Activated CD4-positive, alpha-beta T cell treated with anti-CD3 and anti-CD28 coated beads, Interleukin-2, amount 10 ng/mL, durations not matched to agents 24 days and 14 days (primary cell): ENCODE measurements at regions of chr14 and their contacts with region 1.

Region 1: DNA sequence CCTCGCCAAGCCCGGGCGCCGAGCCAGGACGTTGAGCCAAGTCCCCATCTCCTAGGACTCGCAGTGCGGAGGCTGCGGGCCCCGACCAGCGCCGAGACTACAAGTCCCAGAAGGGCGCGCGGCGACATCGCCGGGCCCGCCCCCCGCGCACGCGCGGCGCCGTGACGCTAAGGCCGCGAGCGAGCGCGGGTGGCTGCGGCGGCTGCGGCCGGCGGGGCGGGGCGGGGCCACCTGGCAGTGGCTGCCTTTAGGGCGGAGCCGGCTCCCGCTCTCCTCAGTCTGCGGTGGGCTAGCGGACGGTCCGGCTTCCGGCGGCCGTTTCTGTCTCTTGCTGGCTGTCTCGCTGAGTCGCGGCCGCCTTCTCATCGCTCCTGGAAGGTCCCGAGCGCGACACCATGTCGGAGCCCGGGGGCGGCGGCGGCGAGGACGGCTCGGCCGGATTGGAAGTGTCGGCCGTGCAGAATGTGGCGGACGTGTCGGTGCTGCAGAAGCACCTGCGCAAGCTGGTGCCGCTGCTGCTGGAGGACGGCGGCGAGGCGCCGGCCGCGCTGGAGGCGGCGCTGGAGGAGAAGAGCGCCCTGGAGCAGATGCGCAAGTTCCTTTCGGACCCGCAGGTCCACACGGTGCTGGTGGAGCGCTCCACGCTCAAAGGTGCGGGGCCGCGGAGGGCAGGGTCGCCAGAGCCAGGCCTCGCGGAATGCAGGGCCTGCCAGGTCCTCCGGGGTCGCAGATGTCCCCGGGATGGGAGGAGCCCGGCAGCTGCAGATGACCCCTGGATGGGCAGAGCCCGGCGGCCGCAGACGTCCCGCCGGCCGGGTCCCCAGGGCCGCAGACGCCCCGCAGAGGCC is at the start of gene DYNC1H1:
- DNase-seq: peak; percentile 98
- H3K4me3 Mint-ChIP-seq: peak within 1 kb of the TSS; percentile 94
- H3K27ac Mint-ChIP-seq: peak within 1 kb of the TSS; percentile 94
- H3K4me1 Mint-ChIP-seq: peaks cover 35% of the 10 kb centered on the region
- H3K27me3 Mint-ChIP-seq: peaks cover 2% of the 10 kb centered on the region
- total RNA-seq, gene DYNC1H1: 265 and 272 TPM in 2 replicates

Region 2: DNA sequence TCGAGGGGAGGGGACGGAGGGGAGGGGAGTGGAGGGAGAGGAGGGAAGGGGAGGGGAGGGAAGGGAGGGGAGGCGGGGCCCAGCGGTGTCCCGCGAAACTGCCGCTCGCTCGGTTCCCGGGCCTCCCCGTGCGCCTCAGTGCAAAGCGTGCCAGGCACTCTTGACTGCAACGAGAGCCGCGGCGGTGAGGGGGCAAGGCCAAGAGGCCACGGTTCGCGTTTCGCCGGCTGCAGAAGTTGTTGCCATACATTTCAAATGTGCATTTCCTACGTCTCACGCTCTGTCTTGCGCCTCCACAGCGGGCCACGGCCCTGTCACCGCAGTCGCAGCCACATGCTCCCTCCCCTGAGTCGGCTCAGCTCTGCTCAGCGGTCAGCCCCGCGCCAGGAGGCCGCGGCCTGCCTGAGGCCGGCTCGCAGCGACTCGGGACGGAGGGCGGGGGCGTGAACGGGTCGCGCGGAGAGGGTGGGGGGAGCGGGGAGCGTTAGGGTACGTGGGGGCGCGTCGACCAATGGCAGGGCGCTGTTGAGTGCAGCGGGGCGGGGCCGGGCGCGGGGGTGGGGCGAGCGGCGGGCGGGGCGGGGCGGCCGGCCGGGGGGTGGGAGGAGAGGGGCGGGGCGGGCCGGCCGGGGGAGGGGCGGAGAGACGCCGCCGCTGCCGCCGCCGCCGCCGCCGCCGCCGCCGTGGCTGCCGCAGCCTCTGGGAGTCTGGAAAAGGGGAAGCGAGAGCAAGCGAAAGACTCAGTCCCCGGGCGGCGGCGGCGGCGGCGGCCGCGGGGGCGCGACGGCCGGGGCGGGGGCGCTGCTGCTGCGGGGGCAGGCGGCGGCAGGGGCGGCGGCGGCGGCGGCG is 203.3 kb before region 1 on chr14 and contains the start of gene PPP2R5C:
- intact Hi-C with region 1: loop called (anchors 2 kb)
- DNase-seq: peak; percentile 94
- H3K4me3 Mint-ChIP-seq: peak within 1 kb of the TSS; percentile 90
- H3K27ac Mint-ChIP-seq: peak within 1 kb of the TSS; percentile 86
- H3K4me1 Mint-ChIP-seq: peaks cover 39% of the 10 kb centered on the region
- H3K27me3 Mint-ChIP-seq: peaks cover 3% of the 10 kb centered on the region
- total RNA-seq, gene PPP2R5C: 160 and 181 TPM in 2 replicates

Region 3: GRCh38 chr14:101947906-101948665 is 16.4 kb before region 1 on chr14:
- intact Hi-C with region 1: loop called (anchors 1 kb)
- DNase-seq: peak; percentile 100
- H3K4me3 Mint-ChIP-seq: peak overlapping the region; percentile 95
- H3K27ac Mint-ChIP-seq: peak overlapping the region; percentile 97
- H3K4me1 Mint-ChIP-seq: peaks cover 17% of the 10 kb centered on the region
- H3K27me3 Mint-ChIP-seq: peaks cover 22% of the 10 kb centered on the region

Region 4: DNA sequence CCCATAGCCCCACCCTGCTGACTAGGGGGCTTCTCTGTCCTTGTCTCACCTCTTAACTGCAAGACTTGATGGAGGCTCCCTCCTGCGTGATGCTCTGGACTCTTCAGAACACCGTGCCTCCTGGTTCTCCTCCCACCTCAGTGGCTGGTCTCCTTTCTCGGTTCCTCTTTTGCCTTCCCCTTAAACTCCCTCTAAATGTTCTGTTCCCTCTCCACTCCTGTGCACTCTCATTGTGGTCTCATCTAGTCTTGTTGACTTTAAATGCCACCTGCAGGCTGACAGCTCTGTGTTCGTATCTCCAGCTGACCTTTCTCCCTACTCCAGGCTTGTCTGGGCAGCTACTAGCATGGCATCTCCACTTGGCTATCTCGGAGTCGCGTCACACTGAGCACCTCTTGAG is 28.2 kb after region 1 on chr14:
- intact Hi-C with region 1: no loop called
- DNase-seq: no peak
- H3K4me3 Mint-ChIP-seq: no peak overlapping the region
- H3K27ac Mint-ChIP-seq: peak overlapping the region; percentile 5
- H3K4me1 Mint-ChIP-seq: peaks cover 10% of the 10 kb centered on the region
- H3K27me3 Mint-ChIP-seq: no peaks in the 10 kb centered on the region

Region 5: DNA sequence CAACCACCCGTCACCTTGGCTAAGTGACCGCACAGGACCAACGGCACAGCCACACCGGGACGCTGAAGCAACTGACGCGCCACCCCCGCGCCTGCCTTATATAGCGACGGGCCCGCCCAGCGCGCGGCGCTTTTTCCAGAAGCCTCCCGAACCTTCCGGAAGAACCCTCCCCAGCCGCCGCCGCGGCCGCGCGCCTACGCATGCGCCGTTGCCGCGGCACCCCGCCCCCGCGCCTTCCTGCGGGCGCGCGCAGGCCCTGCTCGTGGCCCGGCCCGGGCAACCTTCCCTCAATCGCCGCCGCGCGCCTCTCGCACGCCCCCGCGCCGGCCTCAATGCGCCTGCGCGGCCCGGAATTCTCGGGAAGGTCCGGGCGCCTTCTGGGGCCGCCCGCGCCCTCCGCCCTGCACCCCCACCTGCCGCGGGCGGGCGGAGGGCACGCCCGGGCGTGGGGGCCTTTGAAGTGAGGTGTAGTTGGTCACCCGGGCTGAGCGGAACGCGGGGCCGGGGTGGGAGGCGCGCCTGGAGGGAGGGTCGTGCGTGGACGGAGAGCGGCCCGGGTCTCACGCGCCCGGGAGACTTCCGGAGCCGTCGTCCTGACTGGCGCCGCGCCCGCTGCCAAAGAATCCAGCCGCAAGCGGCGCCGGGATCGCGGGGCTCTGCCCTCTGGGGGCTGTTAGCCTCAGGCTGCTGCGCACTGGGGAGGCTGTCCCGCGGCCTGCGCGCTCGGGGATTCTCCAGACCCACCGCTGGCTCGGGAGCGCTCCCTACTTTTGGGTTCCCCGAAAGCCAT is 122.6 kb after region 1 on chr14 and contains the start of gene HSP90AA1:
- intact Hi-C with region 1: loop called (anchors 2 kb)
- DNase-seq: peak; percentile 98
- H3K4me3 Mint-ChIP-seq: peak within 1 kb of the TSS; percentile 92
- H3K27ac Mint-ChIP-seq: peak within 1 kb of the TSS; percentile 98
- H3K4me1 Mint-ChIP-seq: peaks cover 59% of the 10 kb centered on the region
- H3K27me3 Mint-ChIP-seq: no peaks in the 10 kb centered on the region
- total RNA-seq, gene HSP90AA1: 1,216 and 1,268 TPM in 2 replicates

Region 6: DNA sequence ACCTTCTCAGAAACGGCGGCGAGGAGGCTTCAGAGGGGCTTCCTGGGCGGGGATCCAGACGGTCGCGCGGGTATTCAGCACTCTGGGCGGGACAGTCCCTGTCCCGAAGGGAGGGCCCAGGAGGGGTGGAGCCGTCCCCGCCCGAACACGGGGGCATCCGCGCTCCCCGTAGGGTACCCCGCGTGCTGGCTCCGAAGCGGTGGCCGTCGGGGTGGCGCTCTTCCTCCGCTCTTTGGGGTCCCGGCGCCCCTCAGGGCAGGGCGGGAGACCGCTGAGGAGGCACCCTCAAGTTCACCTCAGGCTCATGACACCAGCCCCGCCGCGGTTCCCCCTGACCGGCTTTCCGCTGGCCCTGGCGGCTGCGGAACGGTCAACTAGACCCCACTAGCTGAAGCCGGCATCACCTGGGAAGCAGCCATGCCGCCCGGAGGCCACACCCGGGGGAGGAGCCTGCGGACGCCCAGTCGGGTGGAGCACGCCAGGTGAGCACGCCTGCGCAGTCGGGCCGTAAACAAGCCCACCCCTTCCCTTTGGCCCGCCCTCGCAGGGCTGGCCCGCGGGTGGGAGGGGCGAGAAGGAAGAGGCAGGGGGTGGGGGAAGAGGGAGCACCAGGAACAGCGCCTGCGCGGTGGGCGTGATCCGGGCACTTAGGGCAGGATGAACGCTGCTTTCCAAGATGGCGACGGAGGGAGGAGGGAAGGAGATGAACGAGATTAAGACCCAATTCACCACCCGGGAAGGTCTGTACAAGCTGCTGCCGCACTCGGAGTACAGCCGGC is 174.9 kb after region 1 on chr14 and contains the start of gene WDR20:
- intact Hi-C with region 1: loop called (anchors 2 kb)
- DNase-seq: peak; percentile 100
- H3K4me3 Mint-ChIP-seq: peak within 1 kb of the TSS; percentile 97
- H3K27ac Mint-ChIP-seq: peak within 1 kb of the TSS; percentile 95
- H3K4me1 Mint-ChIP-seq: peaks cover 21% of the 10 kb centered on the region
- H3K27me3 Mint-ChIP-seq: no peaks in the 10 kb centered on the region
- total RNA-seq, gene WDR20: 30.4 and 31.0 TPM in 2 replicates

Region 7: DNA sequence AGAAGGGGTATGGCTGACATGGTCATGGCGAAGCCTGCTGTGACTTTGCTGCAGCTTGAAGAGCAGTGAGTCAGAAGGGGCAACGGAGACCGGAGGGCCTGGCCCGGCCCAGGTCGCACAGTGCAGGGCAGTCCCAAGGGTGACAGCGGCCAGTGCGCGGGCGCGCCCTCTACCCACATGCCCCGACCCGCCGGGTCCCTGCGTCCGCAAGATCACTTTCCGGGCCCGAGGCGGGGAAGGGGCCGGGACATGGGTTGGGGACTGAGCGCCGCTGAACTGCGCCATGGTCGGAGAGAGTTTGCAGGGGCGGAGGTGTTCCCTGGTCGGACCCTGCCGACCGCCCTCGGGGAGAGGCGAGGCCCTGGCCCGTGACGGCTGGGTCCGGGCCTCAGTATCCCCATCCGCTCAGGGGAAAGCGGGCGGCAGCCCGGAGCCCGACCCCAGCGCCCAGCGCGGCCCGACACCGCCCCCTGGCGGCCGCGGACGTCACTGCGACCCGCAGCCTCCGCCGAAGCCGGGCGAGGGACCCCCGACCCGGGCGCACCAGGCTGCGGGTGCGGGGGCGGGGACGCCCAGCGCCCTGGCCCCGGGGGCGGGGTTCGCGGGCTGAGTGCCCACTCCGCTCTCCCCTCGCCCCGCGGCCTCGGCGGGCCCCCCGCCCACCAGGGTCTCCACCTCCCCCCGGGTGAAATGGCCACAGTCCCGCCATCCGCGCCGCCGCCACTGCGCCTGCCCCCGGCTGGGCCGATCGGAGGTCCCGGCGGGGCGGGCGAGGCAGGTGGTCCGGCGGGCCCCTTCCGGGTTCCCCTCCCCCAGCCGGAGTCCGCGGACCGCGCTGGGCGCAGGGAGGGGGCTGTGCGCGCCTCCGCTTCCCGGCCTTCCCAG is 552.3 kb after region 1 on chr14:
- intact Hi-C with region 1: loop called (anchors 5 kb)
- DNase-seq: peak; percentile 93
- H3K4me3 Mint-ChIP-seq: peak overlapping the region; percentile 82
- H3K27ac Mint-ChIP-seq: peak overlapping the region; percentile 68
- H3K4me1 Mint-ChIP-seq: peaks cover 4% of the 10 kb centered on the region
- H3K27me3 Mint-ChIP-seq: peaks cover 10% of the 10 kb centered on the region